ENCODE measurements at regions of chr19 and their contacts with region 1.

Region 1: DNA sequence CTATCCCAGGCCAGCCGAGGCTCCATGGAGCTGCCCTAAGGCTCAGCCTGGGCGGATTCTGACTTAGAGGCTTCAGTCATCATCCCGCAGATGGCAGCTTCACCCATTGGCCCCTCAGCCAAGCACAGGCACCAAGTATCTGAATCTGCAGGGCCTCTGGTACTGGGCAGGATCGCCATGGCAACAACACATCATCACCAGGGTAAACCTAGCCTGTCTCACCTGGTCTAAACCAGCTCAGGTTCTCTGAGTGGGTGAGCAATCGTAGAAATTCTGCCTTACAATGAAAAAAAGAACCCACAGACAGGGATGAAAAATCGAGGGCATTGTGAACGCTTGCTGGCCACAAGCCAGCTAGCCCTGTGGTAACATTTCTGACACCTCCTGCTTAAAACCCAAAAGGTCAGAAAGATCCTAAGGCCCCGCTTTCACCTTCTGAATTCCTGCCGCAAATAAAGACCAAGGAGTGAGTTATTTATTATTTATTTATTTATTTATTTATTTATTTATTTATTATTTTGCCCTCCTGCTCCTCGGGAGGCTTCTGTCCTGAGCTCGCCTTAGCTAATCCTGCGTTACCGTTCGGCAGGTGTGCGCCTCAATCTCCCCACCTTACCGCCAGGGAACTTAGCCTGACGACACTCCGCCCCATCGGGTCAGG is 12.0 kb upstream of the CEACAM21 start:
- DNase-seq: peak; percentile 85
- H3K4me3 Mint-ChIP-seq: peak overlapping the region; percentile 74
- H3K27ac Mint-ChIP-seq: peak overlapping the region; percentile 76
- H3K4me1 Mint-ChIP-seq: peaks cover 57% of the 10 kb centered on the region
- H3K27me3 Mint-ChIP-seq: no peaks in the 10 kb centered on the region

Region 2: DNA sequence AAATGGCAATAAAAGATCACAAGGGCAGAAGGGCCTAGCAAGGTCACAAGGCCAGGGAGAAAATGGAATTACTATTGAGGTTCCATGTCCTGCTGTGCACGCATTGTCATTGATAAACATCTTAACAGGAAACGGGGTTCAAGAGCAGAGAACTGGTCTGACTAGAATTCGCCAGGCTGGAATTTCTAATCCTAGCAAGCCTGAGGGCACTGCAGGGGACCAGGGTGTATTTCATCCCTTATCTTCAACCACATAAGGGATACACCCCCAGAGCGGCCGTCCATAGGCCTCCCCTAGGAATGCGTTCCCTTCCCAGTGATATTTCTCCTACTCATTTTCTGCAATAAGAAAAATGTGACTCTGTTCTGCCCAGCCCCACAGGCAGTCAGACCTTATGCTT is 101.5 kb before region 1 on chr19:
- intact Hi-C with region 1: no loop called
- DNase-seq: no peak
- H3K4me3 Mint-ChIP-seq: no peak overlapping the region
- H3K27ac Mint-ChIP-seq: no peak overlapping the region
- H3K4me1 Mint-ChIP-seq: peaks cover 18% of the 10 kb centered on the region
- H3K27me3 Mint-ChIP-seq: peaks cover 10% of the 10 kb centered on the region

Region 3: GRCh38 chr19:41521931-41522555 is 41.9 kb before region 1 on chr19:
- intact Hi-C with region 1: loop called (anchors 2 kb)
- DNase-seq: peak; percentile 85
- H3K4me3 Mint-ChIP-seq: peak overlapping the region; percentile 84
- H3K27ac Mint-ChIP-seq: peak overlapping the region; percentile 86
- H3K4me1 Mint-ChIP-seq: peaks cover 20% of the 10 kb centered on the region
- H3K27me3 Mint-ChIP-seq: peaks cover 32% of the 10 kb centered on the region

Region 4: GRCh38 chr19:41548954-41549688 is 14.9 kb before region 1 on chr19:
- intact Hi-C with region 1: no loop called
- DNase-seq: peak; percentile 95
- H3K4me3 Mint-ChIP-seq: peak overlapping the region; percentile 99
- H3K27ac Mint-ChIP-seq: peak overlapping the region; percentile 99
- H3K4me1 Mint-ChIP-seq: peaks cover 67% of the 10 kb centered on the region
- H3K27me3 Mint-ChIP-seq: no peaks in the 10 kb centered on the region

Measured in activated CD4-positive, alpha-beta T cell treated with anti-CD3 and anti-CD28 coated beads, Interleukin-2, amount 10 ng/mL, durations not matched to agents 24 days and 14 days (primary cell).